Endothelial cell of umbilical vein (primary cell): ENCODE measurements at regions of chr3 and their contacts with region 1.

Region 1: DNA sequence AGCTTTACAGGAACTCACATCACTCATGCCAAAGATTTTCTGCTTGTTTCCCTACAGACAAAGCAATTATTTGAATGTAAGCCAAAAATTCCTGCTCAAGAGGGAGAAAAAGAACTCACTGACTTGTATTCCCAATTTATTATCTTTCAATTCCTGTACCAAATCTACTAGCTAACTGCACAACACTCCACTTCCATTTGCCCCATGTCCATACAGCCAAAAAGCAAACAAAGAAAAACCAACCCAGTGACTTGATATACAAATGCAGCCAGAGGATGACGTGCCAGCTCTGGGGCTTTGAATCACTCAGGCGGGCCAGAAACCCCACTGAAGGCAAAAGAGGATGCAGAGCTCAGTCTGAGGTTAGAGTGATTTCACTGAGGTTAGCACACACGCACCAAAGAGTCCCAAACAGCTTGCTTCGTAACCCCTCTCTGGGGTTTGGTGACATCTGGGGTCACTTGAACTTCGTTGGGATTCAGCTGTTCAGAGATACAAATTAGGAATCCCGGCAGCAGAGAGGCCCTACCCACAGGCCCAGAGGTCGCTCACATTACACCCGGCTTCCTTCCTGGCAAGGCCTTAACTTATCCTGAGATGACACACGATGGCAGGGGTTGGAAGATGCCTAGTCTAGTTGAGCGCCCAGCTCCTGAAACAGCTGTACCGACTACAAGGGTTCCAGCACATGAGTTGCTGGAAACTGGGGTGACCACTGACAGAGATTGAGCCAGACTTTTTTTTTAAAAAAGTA is 1.6 kb downstream of the RFTN1 start:
- DNase-seq: peak; percentile 83
- H3K4me3 ChIP-seq: peak overlapping the region in 2 of 3 experiments; percentile 78 to 88
- H3K27ac ChIP-seq: peak overlapping the region; percentile 54
- H3K4me1 ChIP-seq: peaks cover 23% of the 10 kb centered on the region
- H3K27me3 ChIP-seq: no peaks in the 10 kb centered on the region
- CTCF ChIP-seq: no peak
- POLR2A ChIP-seq: no peak

Region 2: DNA sequence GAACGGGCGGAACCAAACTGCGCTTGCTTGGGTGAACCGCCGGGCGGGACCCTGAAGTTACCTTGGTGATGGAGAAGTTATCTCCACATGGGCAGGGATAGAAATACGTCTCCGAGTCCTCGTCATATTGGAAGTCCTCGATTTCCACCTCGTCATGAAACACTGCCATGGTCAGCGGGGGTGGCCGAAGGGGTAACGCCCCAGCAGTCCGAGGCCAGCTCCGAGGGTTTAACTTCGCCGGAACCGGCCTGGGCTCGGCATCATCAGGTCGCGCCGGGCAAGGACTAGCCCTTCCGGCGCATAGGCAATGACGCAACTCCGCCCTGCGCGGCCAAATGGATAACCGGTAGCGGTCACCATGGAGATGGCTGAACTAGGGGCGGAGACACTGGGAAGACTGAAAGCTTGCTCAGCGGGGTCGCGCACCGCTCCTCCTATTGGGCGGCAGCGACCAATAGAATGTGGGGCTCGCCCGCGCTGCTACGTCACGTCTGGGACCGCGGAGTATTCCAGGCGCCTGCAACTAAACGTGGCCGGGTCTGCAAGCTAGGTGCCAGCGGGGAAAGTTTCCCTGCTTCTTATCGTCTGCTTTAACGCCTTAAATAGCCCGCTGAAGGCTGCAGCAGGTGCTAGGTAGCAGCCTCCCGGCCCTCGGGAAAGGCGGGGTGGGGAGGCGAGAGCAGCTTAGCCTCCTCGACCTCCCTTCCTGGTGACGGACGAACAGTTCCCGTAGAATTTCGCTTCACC is 247.0 kb before region 1 on chr3 and contains the starts of genes DPH3 and OXNAD1:
- CTCF ChIA-PET with region 1: interaction called, 13 read pairs
- POLR2A ChIA-PET with region 1: interaction called, 3 read pairs
- dilution Hi-C with region 1: no loop called
- intact Hi-C with region 1: loop called (anchors 1 kb)
- DNase-seq: peak; percentile 99
- H3K4me3 ChIP-seq: peak within 1 kb of the TSS; percentile 66 to 93 (median 72)
- H3K27ac ChIP-seq: peak within 1 kb of the TSS; percentile 82
- H3K4me1 ChIP-seq: peaks cover 23% of the 10 kb centered on the region
- H3K27me3 ChIP-seq: no peaks in the 10 kb centered on the region
- CTCF ChIP-seq: no peak
- POLR2A ChIP-seq: peak; percentile 82
- total RNA-seq, gene DPH3: 28.7 and 29.6 TPM in 2 replicates
- total RNA-seq, gene OXNAD1: 8.9 and 9.7 TPM in 2 replicates

Region 3: GRCh38 chr3:16467393-16467792 is 44.5 kb before region 1 on chr3:
- CTCF ChIA-PET with region 1: interaction called, 5 read pairs
- POLR2A ChIA-PET with region 1: no interaction called
- dilution Hi-C with region 1: no loop called
- intact Hi-C with region 1: loop called (anchors 1 kb)
- DNase-seq: no peak
- H3K4me3 ChIP-seq: no peak overlapping the region
- H3K27ac ChIP-seq: no peak overlapping the region
- H3K4me1 ChIP-seq: peaks cover 22% of the 10 kb centered on the region
- H3K27me3 ChIP-seq: no peaks in the 10 kb centered on the region
- CTCF ChIP-seq: no peak
- POLR2A ChIP-seq: no peak

Region 4: GRCh38 chr3:16476641-16477455 is 35.0 kb before region 1 on chr3:
- CTCF ChIA-PET with region 1: interaction called, 10 read pairs
- POLR2A ChIA-PET with region 1: interaction called, 3 read pairs
- dilution Hi-C with region 1: no loop called
- intact Hi-C with region 1: no loop called
- DNase-seq: peak; percentile 90
- H3K4me3 ChIP-seq: no peak overlapping the region
- H3K27ac ChIP-seq: peak overlapping the region; percentile 42
- H3K4me1 ChIP-seq: peaks cover 52% of the 10 kb centered on the region
- H3K27me3 ChIP-seq: no peaks in the 10 kb centered on the region
- CTCF ChIP-seq: no peak
- POLR2A ChIP-seq: no peak

Region 5: DNA sequence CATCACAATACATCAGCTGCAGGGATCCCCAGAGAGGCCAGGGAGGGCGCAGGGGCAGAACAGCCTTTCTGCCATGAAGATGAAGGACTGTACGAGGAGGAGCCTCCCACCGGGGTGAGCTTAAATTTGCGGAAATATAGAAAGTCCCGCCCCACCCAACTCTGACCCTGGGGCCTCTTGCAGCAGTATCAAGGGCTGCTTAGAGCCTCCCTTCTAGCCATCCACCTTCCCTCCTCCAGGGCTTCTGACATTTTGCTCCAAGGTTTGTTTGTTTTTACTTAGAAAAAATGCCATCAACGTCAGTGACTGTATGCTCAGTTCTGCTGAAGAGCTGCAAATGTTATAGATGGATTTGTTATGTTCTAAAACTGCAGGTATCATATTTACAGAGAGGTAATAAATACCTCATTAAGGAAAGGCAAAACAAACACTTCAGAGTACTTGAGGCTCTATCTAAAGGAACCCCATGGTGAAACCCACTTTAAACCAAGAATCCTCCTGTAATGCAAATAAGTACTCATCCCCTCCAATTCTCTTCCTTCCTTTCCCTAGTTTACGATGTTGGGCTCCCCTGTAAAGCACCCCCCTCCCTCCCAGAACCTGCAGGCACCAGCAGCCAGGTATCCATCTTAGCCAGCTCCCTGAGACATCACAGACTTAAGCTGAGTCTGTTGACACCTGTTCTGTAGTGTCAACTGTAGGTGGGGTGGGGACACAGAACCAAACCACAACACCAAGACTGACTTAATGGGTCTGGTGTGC is 28.9 kb before region 1 on chr3:
- CTCF ChIA-PET with region 1: interaction called, 14 read pairs
- POLR2A ChIA-PET with region 1: no interaction called
- dilution Hi-C with region 1: no loop called
- intact Hi-C with region 1: loop called (anchors 1 kb)
- DNase-seq: no peak
- H3K4me3 ChIP-seq: no peak overlapping the region
- H3K27ac ChIP-seq: no peak overlapping the region
- H3K4me1 ChIP-seq: peaks cover 64% of the 10 kb centered on the region
- H3K27me3 ChIP-seq: no peaks in the 10 kb centered on the region
- CTCF ChIP-seq: no peak
- POLR2A ChIP-seq: no peak

Region 6: GRCh38 chr3:16496408-16497222 is 15.2 kb before region 1 on chr3:
- CTCF ChIA-PET with region 1: interaction called, 10 read pairs
- POLR2A ChIA-PET with region 1: no interaction called
- dilution Hi-C with region 1: no loop called
- intact Hi-C with region 1: loop called (anchors 1 kb)
- DNase-seq: no peak
- H3K4me3 ChIP-seq: no peak overlapping the region
- H3K27ac ChIP-seq: no peak overlapping the region
- H3K4me1 ChIP-seq: peaks cover 28% of the 10 kb centered on the region
- H3K27me3 ChIP-seq: no peaks in the 10 kb centered on the region
- CTCF ChIP-seq: no peak
- POLR2A ChIP-seq: no peak